ENCODE measurements at regions of chr21 and their contacts with region 1.

Region 1: DNA sequence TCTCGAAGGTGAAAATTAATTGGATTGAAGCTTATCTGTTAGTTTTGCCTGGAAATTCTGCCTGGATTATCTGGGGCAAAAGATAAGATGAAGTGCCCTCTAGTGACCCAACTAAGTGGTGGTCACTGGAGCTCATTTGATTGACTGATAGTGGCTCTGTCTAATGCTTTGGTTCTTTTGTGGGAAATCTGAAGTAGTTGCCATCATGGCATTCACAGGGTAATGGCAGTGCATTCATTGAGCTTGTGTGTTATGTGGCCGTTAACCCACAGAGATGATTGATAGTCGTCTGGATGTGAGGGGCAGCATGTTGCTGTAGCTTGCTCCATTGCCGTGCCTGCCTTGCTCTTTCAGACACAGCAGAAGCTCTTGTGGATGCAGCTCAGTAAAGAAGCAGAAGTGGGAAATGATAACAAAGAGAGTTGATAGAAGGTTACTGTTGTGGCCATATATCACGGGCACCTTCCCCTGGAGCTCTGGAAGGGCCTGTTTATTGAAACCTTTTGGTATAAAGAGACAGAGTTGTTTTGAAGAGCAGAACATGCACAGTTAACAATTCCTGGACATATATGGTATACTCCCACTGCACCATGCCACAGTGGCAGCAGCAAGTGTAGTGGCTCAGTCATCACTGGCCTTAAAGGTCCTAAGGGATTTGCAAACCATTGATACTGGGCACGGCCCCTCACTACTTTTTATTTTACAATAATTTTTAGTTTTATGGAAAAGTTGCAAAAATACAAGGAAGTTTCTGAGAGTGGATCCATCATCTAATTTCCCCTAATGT is 42.0 kb downstream of the CXADR start:
- DNase-seq: no peak
- CTCF ChIP-seq: peak; percentile 25

Region 2: DNA sequence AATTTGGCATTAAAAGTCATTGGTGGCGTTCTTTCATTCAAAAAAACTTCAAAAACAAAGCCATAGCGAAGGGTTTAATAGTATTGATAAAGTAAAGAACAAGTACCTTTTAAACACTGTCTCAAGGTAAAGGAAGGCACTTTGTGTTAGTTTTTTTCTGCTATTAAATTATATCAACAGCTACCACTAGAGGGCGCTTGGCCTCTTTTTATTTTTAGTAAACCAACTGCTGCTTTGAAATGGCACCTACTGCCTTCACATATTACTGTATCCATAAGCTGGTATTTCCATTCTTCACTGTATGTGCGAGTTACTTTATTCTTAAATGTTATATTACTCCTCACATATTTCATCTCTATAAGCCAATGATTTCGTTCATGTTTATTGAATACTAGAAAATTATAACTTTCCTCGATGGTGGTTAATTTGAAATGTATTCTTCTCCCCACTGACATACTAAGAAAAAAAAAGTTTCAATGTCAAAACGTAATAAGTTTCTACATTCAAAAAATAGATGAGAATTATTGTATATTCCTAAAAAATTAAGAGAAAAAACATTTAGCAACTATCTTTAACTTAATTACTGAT is 167.7 kb before region 1 on chr21:
- in situ Hi-C with region 1: loop called (anchors 25 kb)
- DNase-seq: peak; percentile 51
- CTCF ChIP-seq: peak; percentile 57

Region 3: GRCh38 chr21:17746912-17747311 is 192.0 kb after region 1 on chr21:
- in situ Hi-C with region 1: no loop called
- DNase-seq: no peak
- CTCF ChIP-seq: no peak